ENCODE measurements at regions of chr12 and their contacts with region 1.

Region 1: GRCh38 chr12:47397664-47398281 is 308.1 kb downstream of the RPAP3 start:
- DNase-seq: peak; percentile 64
- ATAC-seq: peak; percentile 62
- H3K4me3 Mint-ChIP-seq: no peak overlapping the region
- H3K27ac Mint-ChIP-seq: peak overlapping the region; percentile 100
- H3K4me1 Mint-ChIP-seq: peaks cover 96% of the 10 kb centered on the region
- H3K27me3 Mint-ChIP-seq: no peaks in the 10 kb centered on the region

Region 2: DNA sequence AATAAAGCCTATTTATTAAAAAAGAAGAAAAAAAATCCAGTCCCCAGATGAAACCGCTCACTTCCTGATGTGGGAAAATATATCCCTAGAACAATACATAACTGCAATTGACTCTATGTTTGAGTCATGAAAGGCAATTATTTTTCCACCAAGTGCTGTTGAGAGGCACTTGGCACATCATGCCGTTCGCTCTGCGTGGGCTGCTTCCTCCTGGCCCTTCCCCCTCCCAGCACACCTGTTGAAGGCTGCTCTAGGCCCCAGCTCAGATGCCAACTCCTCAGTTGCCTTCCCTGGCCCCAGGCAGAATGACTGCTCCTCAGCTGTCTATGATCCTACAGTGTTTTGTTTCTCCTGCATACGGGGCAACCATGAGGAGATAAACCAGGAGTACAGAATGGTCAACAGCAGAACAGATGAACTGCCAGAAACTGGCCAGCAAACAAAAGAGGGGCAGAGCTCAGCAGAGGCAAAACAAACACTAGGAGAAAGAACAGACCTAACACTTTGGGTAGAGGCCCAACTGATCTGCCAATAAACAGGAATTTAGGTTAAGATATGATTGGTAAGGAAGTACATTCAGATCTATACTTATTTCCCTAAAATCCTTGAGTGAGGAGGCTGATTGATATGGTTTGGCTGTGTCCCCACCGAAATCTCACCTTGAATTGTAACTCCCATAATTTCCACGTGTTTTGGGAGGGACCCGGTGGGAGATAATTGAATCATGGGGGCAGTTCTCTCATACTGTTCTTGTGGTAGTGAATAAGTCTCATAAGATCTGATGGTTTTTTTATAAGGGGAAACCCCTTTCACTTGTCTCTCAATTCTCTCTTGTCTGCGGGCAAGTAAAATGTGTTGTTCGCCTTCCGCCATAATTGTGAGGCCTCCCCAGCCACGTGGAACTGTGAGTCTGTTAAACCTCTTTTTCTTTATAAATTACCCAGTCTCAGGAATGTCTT is 1187.6 kb before region 1 on chr12:
- CTCF ChIA-PET with region 1: no interaction called
- POLR2A ChIA-PET with region 1: no interaction called
- intact Hi-C with region 1: loop called (anchors 10 kb)
- DNase-seq: peak; percentile 88
- ATAC-seq: peak; percentile 71
- H3K4me3 Mint-ChIP-seq: peak overlapping the region; percentile 58
- H3K27ac Mint-ChIP-seq: peak overlapping the region; percentile 97
- H3K4me1 Mint-ChIP-seq: peaks cover 79% of the 10 kb centered on the region
- H3K27me3 Mint-ChIP-seq: no peaks in the 10 kb centered on the region

Region 3: GRCh38 chr12:47071241-47071852 is 326.4 kb before region 1 on chr12:
- CTCF ChIA-PET with region 1: interaction called, 10 read pairs
- POLR2A ChIA-PET with region 1: no interaction called
- intact Hi-C with region 1: no loop called
- DNase-seq: peak; percentile 17
- ATAC-seq: no peak
- H3K4me3 Mint-ChIP-seq: no peak overlapping the region
- H3K27ac Mint-ChIP-seq: no peak overlapping the region
- H3K4me1 Mint-ChIP-seq: peaks cover 24% of the 10 kb centered on the region
- H3K27me3 Mint-ChIP-seq: no peaks in the 10 kb centered on the region

Region 4: DNA sequence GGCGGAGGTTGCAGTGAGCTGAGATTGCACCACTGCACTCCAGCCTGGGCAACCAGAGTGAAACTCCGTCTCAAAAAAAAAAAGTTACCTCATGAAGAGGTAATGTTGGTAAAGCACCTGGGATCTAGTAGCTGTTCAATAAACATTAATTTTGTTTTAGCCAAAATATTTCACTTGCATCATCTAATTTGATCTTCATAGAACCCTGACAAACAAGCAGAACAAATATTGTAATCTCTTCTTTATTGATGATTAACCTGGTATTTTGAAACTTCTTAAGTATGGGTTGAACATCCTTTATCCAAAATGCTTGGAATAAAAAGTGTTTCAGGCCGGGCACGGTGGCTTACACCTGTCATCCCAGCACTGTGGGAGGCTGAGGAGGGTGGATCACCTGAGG is 169.0 kb before region 1 on chr12:
- CTCF ChIA-PET with region 1: interaction called, 11 read pairs
- POLR2A ChIA-PET with region 1: no interaction called
- intact Hi-C with region 1: no loop called
- DNase-seq: no peak
- ATAC-seq: no peak
- H3K4me3 Mint-ChIP-seq: no peak overlapping the region
- H3K27ac Mint-ChIP-seq: no peak overlapping the region
- H3K4me1 Mint-ChIP-seq: peaks cover 70% of the 10 kb centered on the region
- H3K27me3 Mint-ChIP-seq: no peaks in the 10 kb centered on the region

Region 5: GRCh38 chr12:47350062-47350408 is 47.7 kb before region 1 on chr12:
- CTCF ChIA-PET with region 1: interaction called, 12 read pairs
- POLR2A ChIA-PET with region 1: no interaction called
- intact Hi-C with region 1: loop called (anchors 1 kb)
- DNase-seq: no peak
- ATAC-seq: peak; percentile 88
- H3K4me3 Mint-ChIP-seq: peak overlapping the region; percentile 53
- H3K27ac Mint-ChIP-seq: peak overlapping the region; percentile 98
- H3K4me1 Mint-ChIP-seq: peaks cover 79% of the 10 kb centered on the region
- H3K27me3 Mint-ChIP-seq: no peaks in the 10 kb centered on the region

Region 6: DNA sequence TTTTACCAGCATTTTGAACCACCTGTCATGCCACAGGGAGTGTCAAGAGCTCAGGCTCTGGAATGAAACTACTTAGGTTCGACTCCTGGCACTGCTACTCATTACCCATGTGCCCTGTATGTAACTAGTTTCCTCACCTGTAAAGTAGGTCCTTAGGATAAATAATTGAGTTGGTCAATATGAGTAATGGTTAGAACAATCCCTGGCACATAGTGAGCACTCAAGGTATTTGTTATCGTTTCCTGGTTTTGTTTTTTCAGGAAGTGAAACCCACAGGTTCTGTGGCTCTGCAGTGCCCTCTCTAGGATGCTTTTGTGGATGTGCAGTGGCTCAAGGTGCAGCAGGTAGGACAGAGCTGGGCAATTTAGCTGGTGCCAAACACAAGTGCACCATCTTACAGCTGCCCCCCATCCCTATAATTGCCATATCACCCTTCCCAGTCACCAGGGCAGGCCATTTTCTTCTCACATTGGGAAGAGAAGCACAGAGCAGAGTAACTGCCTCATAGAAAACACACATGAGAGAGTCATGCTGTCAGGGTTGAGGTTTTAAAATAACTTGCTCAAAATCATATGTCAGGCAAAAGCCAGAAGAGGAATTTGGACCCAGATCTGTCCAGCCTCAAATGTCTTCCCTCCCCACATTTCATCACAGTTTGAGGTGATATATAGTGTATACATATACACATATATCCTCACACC is 10.5 kb after region 1 on chr12:
- CTCF ChIA-PET with region 1: interaction called, 27 read pairs
- POLR2A ChIA-PET with region 1: no interaction called
- intact Hi-C with region 1: no loop called
- DNase-seq: peak; percentile 60
- ATAC-seq: peak; percentile 55
- H3K4me3 Mint-ChIP-seq: no peak overlapping the region
- H3K27ac Mint-ChIP-seq: peak overlapping the region; percentile 52
- H3K4me1 Mint-ChIP-seq: peaks cover 75% of the 10 kb centered on the region
- H3K27me3 Mint-ChIP-seq: no peaks in the 10 kb centered on the region

Region 7: DNA sequence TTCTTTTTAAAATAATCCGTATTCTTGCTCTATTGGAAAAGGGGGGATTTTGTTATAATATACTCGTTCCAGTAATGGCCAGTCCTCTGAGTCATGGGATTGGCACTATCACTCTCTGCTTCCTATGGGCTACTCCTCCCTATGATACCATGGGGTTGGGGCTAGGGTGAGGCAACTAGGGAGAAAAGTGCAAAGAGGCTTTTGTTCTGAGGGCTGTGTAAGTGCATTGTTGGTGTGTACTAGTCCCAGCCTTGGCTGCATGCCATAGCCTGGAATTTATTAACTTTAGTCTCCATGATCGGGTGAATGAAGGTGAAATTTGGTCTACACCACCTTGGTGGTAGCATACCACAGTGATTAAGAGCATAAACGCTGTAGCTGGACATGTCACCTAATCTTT is 60.5 kb after region 1 on chr12:
- CTCF ChIA-PET with region 1: no interaction called
- POLR2A ChIA-PET with region 1: no interaction called
- intact Hi-C with region 1: no loop called
- DNase-seq: no peak
- ATAC-seq: no peak
- H3K4me3 Mint-ChIP-seq: no peak overlapping the region
- H3K27ac Mint-ChIP-seq: no peak overlapping the region
- H3K4me1 Mint-ChIP-seq: no peaks in the 10 kb centered on the region
- H3K27me3 Mint-ChIP-seq: no peaks in the 10 kb centered on the region